Cardiac septum (tissue), 1 donor: ENCODE measurements at regions of chr7 and their contacts with region 1.

Region 1: DNA sequence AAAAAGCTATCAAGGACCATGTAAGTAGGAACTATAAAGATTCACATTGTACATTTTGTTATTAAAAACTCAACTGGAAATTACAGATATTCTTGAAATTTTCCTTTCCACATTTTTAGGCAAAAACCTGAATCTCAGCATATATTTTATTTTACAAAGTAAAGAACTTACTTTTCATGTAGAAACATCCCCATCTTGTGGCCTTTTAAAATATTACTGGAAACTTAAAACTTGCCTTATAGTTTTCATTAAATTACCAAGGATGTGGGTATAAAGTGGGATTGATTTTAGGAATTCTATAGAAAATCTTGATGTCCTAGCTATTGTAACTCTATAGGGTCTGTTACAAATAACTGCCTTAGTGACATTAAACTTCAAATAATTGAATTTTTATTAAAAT is 10.6 kb downstream of the DBF4 start:
- DNase-seq: no peak

Region 2: DNA sequence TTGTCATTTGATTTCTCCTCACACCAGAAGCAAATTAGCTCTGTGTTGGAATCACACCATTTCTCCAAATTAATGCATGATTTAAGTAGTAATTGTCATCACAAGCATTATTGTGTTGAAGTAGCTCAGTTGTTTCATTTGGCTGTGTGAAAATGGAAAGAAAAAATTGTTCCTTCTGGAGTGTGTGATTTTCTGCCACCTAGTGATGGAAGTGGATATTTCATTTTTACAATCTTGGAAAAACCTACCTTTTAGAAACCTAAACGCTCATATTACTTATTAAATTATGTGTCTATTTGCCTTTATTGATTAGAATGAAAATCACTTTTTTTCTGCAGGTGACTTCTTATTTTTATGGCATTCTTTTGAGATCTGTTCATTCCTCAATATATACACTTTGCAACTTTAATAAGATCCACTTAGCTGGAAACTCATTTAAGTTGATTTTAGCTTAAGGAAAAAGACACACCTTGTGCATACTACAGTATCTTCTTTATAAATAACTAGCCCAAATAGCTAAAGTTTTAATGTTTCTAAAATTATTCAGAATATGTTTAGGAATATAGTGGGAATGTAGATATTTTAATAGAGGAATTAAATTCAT is 282.9 kb after region 1 on chr7:
- intact Hi-C with region 1: loop called (anchors 5 kb)
- DNase-seq: no peak